Activated T-helper 1 cell treated with anti-CD3 and anti-CD28 coated beads, Interleukin-12 subunit alpha, Interleukin-12 subunit beta, Interleukin-2, Interleukin-4 antibody, amounts not matched to agents 30 ng/mL and 10 ng/mL and 1 ng/mL, durations not matched to agents 14 hours and 24 hours and 36 hours (primary cell): ENCODE measurements at regions of chr21 and their contacts with region 1.

Region 1: DNA sequence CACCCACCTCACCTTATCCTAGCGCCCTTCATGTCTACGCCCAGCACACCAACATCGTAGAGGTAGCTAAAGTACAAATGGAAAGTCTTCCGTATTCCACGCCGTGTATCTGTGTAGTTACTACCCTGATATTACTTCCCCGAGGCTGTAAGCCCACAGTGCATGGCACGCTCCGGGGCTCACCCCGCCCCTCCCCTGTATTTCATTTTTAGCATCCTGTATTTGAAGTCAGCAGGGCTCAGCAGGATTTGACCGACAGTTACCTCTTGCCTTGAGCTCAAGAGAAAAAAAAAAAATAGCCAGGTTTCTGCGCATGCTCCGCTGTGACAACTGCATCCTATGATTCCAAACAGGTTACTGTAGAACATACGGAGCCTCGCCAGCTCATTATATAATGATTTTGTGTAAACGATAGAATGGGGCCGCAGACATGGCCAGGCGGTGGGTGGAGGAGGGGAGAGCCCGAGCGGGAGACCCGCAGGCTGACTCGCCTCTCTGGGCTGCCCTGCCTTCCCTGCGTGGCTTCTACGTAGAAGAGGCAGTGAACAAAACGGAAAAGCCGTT is 1.3 kb downstream of the ABCG1 start:
- DNase-seq: peak; percentile 78
- H3K4me3 Mint-ChIP-seq: peak overlapping the region; percentile 100
- H3K27ac Mint-ChIP-seq: peak overlapping the region; percentile 100
- H3K4me1 Mint-ChIP-seq: peaks cover 36% of the 10 kb centered on the region
- H3K27me3 Mint-ChIP-seq: peaks cover 3% of the 10 kb centered on the region

Region 2: GRCh38 chr21:42164064-42164789 is 56.0 kb before region 1 on chr21:
- intact Hi-C with region 1: loop called (anchors 1 kb)
- DNase-seq: peak; percentile 46
- H3K4me3 Mint-ChIP-seq: no peak overlapping the region
- H3K27ac Mint-ChIP-seq: peak overlapping the region; percentile 14
- H3K4me1 Mint-ChIP-seq: peaks cover 7% of the 10 kb centered on the region
- H3K27me3 Mint-ChIP-seq: peaks cover 4% of the 10 kb centered on the region

Region 3: GRCh38 chr21:42193131-42193671 is 27.0 kb before region 1 on chr21:
- intact Hi-C with region 1: loop called (anchors 1 kb)
- DNase-seq: peak; percentile 75
- H3K4me3 Mint-ChIP-seq: peak overlapping the region; percentile 72
- H3K27ac Mint-ChIP-seq: peak overlapping the region; percentile 87
- H3K4me1 Mint-ChIP-seq: peaks cover 63% of the 10 kb centered on the region
- H3K27me3 Mint-ChIP-seq: peaks cover 4% of the 10 kb centered on the region

Region 4: DNA sequence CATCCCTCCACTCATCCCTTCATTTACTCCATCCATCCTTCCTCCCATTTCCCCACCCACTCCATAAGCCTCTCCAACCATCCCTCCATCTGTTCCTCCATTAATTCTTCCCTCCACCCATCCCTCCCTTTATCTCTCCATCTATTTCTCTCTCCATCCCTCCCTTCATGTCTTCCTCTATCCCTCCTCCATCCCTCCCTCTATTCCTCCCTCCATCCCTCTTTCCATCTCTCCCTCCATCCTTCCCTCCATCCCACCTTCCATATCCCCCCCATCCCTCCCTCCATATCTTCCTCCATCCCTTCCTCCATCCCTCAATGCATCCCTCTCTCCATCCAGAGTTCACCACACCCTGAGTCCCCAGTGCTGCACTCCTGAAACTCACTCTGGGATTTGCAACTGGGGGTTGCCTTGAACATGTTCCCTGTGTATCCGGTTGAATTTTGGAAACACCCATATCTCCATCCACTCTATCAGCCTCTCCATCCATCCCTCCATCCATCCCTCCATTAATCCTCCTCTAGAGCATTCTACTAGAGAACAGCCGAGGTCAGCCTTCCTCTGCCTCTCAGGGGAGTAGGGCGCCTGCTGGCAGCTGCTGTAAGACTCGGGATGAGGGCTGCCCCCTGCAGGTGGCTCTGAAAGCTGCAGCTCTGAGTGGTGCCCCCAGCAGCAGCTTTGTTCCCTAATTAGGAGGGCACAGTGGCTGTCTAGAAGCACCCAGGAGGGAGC is 38.1 kb after region 1 on chr21:
- intact Hi-C with region 1: loop called (anchors 1 kb)
- DNase-seq: peak; percentile 63
- H3K4me3 Mint-ChIP-seq: no peak overlapping the region
- H3K27ac Mint-ChIP-seq: no peak overlapping the region
- H3K4me1 Mint-ChIP-seq: peaks cover 6% of the 10 kb centered on the region
- H3K27me3 Mint-ChIP-seq: peaks cover 4% of the 10 kb centered on the region